Head of caudate nucleus (tissue), 42 donors: ENCODE measurements at regions of chr5 and their contacts with region 1.

Region 1: GRCh38 chr5:142012792-142013388 is at the start of gene GNPDA1:
- DNase-seq: peak; percentile 52 to 92 (median 83)

Region 2: GRCh38 chr5:141574122-141574510 is 438.8 kb before region 1 on chr5:
- intact Hi-C with region 1: no loop called
- DNase-seq: no peak

Region 3: GRCh38 chr5:142053426-142054151 is 40.7 kb after region 1 on chr5:
- intact Hi-C with region 1: loop called (anchors 5 kb)
- DNase-seq: peak in 19 of 42 donors; percentile 17 to 75 (median 40)

Region 4: GRCh38 chr5:142063878-142064331 is 51.0 kb after region 1 on chr5:
- intact Hi-C with region 1: loop called (anchors 5 kb)
- DNase-seq: peak; percentile 88 to 99 (median 97)

Region 5: DNA sequence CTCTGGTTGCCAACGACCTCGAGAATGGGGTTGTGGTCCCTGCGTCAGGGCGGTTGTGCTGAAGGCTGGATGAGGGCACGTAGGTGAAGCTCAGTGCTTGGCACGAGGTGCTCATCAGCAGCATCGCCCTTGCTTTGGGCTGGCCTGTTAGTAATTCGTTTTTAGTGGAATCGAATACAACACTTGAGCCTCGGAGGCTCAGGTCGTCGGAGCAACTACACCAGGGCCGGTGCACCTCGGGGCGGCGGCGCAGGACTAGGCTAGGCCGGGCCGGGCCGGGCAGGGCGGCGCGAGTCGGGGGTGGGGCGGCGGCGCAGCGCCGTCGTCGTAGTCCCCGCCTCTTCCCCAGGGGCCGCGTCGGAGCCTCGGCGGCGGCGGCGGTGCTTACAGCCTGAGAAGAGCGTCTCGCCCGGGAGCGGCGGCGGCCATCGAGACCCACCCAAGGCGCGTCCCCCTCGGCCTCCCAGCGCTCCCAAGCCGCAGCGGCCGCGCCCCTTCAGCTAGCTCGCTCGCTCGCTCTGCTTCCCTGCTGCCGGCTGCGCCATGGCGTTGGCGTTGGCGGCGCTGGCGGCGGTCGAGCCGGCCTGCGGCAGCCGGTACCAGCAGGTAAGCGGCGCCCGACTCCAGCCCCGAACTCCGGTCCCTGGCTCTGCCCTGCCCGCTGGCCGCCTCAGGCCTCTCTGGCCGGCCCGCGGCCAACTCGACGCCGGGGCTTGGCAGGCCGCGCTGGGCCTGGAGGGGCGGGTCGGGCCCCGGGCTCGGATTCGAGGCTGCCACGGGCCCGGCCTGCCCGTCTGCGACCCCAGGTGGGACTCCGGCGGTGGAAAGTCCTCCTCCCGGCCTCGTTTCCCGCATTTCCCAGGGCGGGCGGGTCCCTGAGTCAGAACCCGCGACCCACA is 95.8 kb after region 1 on chr5 and contains the start of gene NDFIP1:
- intact Hi-C with region 1: loop called (anchors 5 kb)
- DNase-seq: peak; percentile 50 to 94 (median 87)

Region 6: DNA sequence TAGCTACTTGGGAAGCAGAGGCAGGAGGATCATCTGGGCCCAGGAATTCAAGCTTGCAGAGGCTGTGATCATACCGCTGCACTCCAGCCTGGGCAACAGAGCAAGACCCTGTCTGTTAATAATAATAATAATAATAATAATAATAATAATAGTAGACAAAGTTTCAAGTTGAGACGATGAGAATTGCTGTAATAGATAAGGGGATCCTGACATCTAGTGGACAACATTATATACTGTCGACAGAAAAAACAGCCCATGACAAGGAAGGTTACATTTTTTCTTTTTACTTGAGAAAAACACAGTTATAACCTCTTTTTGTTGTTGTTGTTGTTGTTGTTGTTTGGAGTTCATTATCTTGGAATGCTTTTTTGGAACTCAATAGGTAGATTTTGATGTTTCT is 131.0 kb after region 1 on chr5:
- intact Hi-C with region 1: loop called (anchors 5 kb)
- DNase-seq: no peak